Posterior vena cava (tissue), 2 donors: ENCODE measurements at regions of chr4 and their contacts with region 1.

Region 1: GRCh38 chr4:37715889-37716402 is 29.8 kb upstream of the RELL1 start:
- DNase-seq: no peak

Region 2: DNA sequence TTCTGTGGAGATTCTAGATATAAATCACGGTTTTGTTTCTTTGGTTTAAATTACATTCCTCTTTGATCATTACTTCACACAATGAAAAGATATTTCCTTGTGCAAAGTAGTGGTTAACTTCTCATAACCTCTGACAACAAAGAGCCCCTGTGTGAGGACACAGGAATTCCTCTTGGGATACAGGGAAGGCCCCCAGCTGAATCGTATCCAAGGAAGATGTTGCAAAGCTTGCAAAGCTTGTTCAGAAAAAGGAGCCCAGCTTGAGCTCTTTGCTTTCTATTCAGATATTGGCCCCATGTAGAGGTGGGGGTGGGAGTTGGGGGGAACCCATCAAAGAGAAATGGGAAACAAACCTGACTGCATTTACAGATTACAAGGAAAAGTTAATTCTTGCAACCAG is 175.5 kb before region 1 on chr4:
- intact Hi-C with region 1: loop called in 1 of 2 experiments (anchors 5 kb)
- DNase-seq: no peak